OCI-LY7 (cell line): ENCODE measurements at regions of chr2 and their contacts with region 1.

Region 1: GRCh38 chr2:37337642-37338310 is 6.7 kb upstream of the QPCT start:
- DNase-seq: peak; percentile 35
- H3K4me3 ChIP-seq: peak overlapping the region; percentile 49
- H3K27ac ChIP-seq: peak overlapping the region; percentile 74
- H3K4me1 ChIP-seq: peaks cover 76% of the 10 kb centered on the region
- CTCF ChIP-seq: no peak

Region 2: GRCh38 chr2:36408198-36408703 is 929.5 kb before region 1 on chr2:
- CTCF ChIA-PET with region 1: no interaction called
- POLR2A ChIA-PET with region 1: no interaction called
- intact Hi-C with region 1: no loop called
- DNase-seq: no peak
- H3K4me3 ChIP-seq: no peak overlapping the region
- H3K27ac ChIP-seq: no peak overlapping the region
- H3K4me1 ChIP-seq: peaks cover 41% of the 10 kb centered on the region
- CTCF ChIP-seq: no peak

Region 3: DNA sequence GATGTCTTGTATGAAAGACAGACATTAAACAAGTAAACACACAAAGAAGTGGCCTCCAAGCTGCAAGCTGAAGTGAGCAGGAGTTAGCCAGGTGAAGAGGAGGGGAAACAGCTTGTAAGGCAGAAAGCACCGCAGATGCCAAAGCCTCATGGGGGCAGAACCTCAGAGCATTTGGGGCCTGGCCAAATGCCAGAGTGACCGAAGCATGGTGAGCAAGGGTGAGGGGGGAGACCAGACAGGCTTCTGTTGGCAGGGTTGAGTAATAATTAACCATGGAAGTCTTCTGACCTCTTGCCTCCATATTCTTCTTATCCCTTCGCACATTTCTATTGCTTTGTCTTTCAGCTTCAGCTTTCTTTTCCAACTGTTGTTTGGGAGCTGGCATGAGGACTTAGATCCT is 12.3 kb after region 1 on chr2:
- CTCF ChIA-PET with region 1: interaction called, 3 read pairs
- POLR2A ChIA-PET with region 1: interaction called, 210 read pairs
- intact Hi-C with region 1: no loop called
- DNase-seq: peak; percentile 63
- H3K4me3 ChIP-seq: no peak overlapping the region
- H3K27ac ChIP-seq: peak overlapping the region; percentile 43
- H3K4me1 ChIP-seq: peaks cover 71% of the 10 kb centered on the region
- CTCF ChIP-seq: no peak

Region 4: GRCh38 chr2:37357530-37357929 is 19.8 kb after region 1 on chr2:
- CTCF ChIA-PET with region 1: interaction called, 3 read pairs
- POLR2A ChIA-PET with region 1: interaction called, 210 read pairs
- intact Hi-C with region 1: loop called (anchors 2 kb)
- DNase-seq: no peak
- H3K4me3 ChIP-seq: no peak overlapping the region
- H3K27ac ChIP-seq: peak overlapping the region; percentile 54
- H3K4me1 ChIP-seq: peaks cover 75% of the 10 kb centered on the region
- CTCF ChIP-seq: no peak